ENCODE measurements at regions of chr1 and their contacts with region 1.

Region 1: DNA sequence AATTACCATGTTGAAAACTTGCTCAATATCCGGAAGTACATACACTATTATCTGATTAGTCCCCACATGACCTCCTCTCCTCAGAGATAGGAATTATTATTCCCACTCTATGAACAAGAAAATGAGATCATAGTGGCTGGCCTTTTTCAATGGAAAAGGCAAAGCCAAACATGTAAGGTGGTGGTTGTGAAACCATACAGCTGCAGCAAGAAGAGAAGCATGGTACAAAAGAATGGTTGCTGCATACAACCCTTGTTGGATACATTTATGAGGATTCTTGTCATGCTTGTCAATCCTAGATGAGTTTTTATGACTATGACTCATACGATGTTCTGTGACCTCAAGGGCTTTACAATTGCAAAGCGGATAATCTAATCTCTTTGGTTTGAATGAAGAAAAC is 514.7 kb downstream of the PLPP3 start:
- DNase-seq: no peak
- H3K4me3 ChIP-seq: no peak overlapping the region
- H3K27ac ChIP-seq: no peak overlapping the region
- H3K4me1 ChIP-seq: peaks cover 0 to 4% (median 0%) of the 10 kb centered on the region in 4 donors
- H3K27me3 ChIP-seq: no peaks in the 10 kb centered on the region
- CTCF ChIP-seq: no peak
- EP300 ChIP-seq: no peak
- POLR2A ChIP-seq: no peak

Region 2: DNA sequence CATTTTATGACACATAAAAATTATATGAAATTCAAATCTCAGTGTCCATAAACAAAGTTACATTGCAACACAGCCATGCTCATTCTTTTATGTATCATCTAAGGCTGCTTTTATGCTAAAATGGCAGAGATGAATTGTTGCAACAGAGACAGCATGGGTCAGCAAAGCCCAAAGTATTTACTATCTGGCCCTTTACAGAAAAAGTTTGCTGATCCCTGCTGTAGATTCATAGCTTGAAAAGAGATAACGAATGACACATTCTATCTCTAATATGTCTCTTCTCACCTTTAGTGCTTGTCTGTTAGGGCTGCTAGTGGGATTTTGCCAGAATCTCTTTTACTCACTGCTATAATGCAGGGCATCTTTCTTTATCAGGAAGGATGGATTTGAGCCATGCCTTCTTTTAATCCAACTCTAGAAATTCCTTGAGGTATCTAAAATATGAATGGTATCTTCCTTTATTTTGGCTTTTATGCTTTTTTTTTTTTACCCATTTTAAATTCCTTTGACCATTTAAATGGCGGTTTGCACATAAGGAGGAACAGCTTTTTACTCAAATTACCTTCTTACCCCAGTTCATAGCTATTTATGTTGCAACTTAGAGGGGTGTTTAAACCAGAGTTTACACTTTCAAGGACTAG is 83.6 kb before region 1 on chr1:
- intact Hi-C with region 1: loop called (anchors 5 kb)
- DNase-seq: no peak
- H3K4me3 ChIP-seq: no peak overlapping the region
- H3K27ac ChIP-seq: no peak overlapping the region
- H3K4me1 ChIP-seq: peaks cover 0 to 8% (median 2%) of the 10 kb centered on the region in 4 donors
- H3K27me3 ChIP-seq: no peaks in the 10 kb centered on the region
- CTCF ChIP-seq: no peak
- EP300 ChIP-seq: no peak
- POLR2A ChIP-seq: no peak